ENCODE measurements at regions of chr22 and their contacts with region 1.

Region 1: DNA sequence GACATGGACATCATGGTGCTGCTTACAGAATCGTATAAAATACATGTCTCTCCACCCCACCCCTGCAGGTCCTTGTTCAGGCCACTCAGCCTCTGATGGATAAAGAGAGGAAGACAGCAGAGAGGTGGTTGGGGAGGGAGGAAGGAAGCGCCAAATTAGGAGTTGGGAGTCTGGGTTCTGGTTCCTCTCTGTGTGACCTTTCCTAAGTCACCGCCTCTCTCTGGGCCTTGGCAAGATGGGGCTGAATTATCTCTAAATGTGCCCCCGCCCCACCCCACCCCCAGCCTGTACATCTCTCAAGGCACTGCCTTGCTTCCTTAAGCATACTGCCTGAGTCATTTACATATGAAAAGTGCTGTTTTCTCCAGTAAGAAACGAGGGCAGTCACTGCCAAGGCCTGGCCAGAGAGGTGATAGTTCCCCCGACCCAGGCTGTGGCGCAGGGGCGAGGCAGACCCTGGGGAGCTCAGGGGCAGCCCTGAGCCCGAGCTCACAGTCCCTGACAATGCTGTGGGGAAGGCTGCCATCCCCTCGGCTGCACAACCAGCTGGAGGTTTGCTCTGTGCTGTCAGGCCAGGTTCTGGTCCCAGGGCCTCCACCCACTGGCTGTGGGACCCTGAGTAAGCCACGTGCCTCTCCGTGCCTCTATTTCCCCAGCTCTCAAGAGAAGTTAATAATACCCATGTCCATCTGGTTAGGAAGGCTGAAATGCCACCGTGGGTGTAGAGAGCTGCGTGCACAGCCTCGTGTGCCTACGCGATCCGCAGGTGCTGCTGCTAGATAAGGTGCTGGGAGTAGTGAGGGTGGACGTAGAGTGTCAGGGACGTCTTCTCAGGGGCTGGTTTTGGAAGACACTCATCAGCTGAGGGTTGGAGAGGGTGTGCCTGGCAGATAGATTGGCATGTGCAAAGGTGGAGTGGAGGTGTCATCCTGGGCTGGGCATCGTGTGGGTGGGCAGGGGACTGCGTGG is 55.3 kb downstream of the CACNA1I start:
- DNase-seq: no peak

Region 2: GRCh38 chr22:39183991-39184585 is 441.8 kb before region 1 on chr22:
- intact Hi-C with region 1: no loop called
- DNase-seq: no peak

Region 3: DNA sequence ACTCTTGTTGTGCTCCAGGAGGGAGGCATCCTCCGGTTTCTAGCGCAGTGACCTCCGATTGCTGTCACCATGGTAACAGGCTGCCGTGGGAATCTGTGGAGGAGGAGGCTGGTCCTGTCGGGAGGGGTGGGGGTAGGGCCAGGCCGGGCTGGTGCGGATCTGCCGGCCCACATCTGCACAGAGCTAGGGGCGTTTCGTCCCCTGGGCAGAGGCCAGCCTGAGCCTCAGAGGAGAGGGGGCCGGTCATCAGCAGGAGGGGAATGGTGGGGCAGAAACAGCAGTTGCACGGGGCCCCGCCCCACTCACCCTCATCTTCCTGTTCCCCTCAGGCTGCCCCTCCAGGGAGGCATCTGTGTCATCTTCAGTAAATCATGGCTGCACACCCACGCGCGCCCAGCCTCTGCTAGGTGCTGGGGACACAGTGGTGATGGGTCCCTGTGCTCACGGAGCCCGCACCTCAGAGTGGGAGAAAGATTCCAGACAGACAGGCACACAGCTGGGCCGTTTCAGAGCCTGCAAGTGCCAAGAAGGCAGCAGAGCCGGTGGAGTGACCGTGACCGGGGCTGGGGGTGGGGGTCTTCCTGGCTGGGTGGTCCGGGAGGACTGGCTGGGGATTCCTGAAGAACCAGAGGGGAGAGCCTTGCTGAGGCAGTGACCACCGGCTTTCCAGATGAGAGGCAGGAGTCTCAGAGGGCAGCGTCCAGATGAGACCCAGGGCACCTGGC is 65.2 kb after region 1 on chr22:
- intact Hi-C with region 1: no loop called
- DNase-seq: no peak

Region 4: DNA sequence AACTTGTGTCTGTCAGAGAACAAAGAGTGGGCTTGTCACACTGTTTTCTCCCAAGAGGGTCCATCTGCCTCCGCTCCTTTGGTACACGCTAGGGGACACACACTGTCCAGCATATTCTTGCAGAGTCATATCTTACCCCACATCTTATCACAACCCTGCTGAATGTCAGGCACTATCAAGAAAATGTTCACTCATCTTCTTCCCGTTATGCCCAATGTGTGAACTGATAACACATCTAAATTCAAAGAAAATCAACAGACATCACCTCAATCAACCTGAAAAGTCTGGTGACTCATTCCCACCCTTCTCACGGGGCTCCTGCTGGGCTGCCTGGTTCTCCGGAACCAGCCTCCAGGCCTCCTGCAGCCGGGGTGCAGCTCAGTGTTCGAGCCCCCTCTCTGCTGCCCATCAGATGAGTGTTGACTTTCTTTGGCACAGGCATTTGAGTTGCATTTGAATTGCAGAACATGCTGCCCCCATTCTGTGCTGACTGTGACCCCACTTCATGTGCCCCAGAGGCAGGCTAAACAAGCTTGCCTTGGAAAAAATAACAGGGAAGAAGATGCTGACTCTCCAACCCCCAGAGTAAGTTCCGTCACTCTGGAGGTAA is 294.4 kb after region 1 on chr22:
- intact Hi-C with region 1: loop called in 1 of 2 experiments (anchors 2 kb)
- DNase-seq: no peak